ENCODE measurements at regions of chr7 and their contacts with region 1.

Region 1: DNA sequence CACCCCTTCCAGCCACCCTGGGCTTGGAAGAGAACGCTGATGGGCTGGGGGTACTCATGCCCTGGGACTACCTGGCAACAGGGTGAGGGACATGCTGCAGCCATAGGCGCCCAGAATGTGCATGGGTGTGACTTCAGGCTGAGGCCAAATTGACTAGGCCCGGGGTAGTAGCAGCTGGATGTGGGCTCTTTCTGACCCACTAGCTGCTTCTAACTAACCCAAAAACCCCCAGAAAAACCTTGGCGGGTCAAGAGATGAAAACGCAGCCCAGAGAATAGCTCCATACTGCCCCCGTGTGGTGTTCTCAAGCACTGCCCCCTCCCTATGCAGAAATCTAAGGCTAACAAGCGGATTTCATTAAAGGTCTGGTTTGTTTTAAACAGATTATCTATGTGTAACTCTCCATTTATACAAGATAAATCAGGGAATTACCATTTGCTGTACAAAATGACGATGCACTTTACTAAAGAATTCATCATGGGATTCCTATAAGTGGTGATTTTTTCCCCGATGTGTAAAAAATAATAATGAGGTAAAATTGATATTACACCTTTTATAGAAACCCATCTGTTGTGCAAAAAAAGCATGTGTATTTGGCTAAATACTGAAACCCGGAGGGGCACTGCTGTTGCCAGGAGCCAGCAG is 4.2 kb downstream of the SMARCD3 start:
- DNase-seq: peak; percentile 43 to 63 (median 55)
- ATAC-seq: no peak
- H3K4me3 ChIP-seq: no peak overlapping the region
- H3K27ac ChIP-seq: no peak overlapping the region
- H3K4me1 ChIP-seq: peaks cover 53% of the 10 kb centered on the region
- H3K27me3 ChIP-seq: no peaks in the 10 kb centered on the region
- CTCF ChIP-seq: peak; percentile 64 to 91 (median 66)
- POLR2A ChIP-seq: no peak

Region 2: GRCh38 chr7:151304856-151305255 is 60.5 kb after region 1 on chr7:
- intact Hi-C with region 1: loop called (anchors 5 kb)
- DNase-seq: no peak
- ATAC-seq: no peak
- H3K4me3 ChIP-seq: no peak overlapping the region
- H3K27ac ChIP-seq: no peak overlapping the region
- H3K4me1 ChIP-seq: peaks cover 9% of the 10 kb centered on the region
- H3K27me3 ChIP-seq: peaks cover 0 to 3% of the 10 kb centered on the region in 2 donors
- CTCF ChIP-seq: no peak
- POLR2A ChIP-seq: no peak